A549 (cell line): ENCODE measurements at regions of chr17 and their contacts with region 1.

Region 1: DNA sequence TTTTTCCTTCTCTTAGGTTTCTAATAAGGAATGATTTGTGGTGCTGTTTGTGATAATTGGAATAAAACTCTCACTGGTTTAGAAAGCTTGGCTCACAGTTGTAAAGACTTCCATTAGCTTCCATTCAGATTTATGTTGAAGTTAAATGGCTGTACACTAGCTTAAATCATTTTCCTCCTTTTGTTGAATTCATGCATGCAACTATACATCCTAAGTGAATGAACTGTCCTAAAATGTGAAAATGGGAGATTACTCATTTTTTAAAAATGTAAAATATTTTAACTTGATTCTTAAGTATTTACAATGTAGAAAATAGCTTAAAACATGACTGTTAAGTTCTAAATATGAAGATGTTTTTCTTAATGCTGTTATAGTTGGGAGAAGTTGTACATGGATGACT is 15.2 kb downstream of the PRKCA start:
- DNase-seq: no peak
- ATAC-seq: no peak
- H3K4me3 ChIP-seq: no peak overlapping the region
- H3K27ac ChIP-seq: peak overlapping the region; percentile 15 to 36; a peak in 2 of 6 replicates
- H3K4me1 ChIP-seq: peaks cover 29% of the 10 kb centered on the region
- CTCF ChIP-seq: no peak
- EP300 ChIP-seq: no peak
- POLR2A ChIP-seq: no peak
- RAD21 ChIP-seq: no peak

Region 2: DNA sequence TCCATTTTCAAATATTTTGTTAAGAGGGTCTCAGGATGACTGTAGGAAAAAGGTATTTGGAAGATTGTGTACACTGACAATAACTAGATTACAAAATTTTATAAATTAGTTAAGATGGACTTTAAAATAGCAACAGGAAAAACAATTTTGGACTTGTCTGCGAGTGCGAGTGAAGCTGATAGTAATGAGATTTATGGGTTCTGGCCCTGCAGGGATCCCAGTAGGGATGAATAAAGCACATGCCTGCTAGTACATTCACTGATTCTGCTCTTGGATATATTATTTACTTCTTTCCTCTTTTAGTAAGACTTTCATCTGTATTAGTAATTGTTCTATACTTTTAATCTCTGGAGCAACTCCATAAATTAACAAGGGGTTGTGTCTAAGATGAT is 13.0 kb after region 1 on chr17:
- CTCF ChIA-PET with region 1: interaction called, 10 read pairs
- POLR2A ChIA-PET with region 1: no interaction called
- DNase-seq: no peak
- ATAC-seq: no peak
- H3K4me3 ChIP-seq: no peak overlapping the region
- H3K27ac ChIP-seq: no peak overlapping the region
- H3K4me1 ChIP-seq: no peaks in the 10 kb centered on the region
- CTCF ChIP-seq: no peak
- EP300 ChIP-seq: no peak
- POLR2A ChIP-seq: no peak
- RAD21 ChIP-seq: no peak

Region 3: GRCh38 chr17:66405836-66406677 is 88.4 kb after region 1 on chr17:
- CTCF ChIA-PET with region 1: no interaction called
- POLR2A ChIA-PET with region 1: no interaction called
- DNase-seq: no peak
- ATAC-seq: no peak
- H3K4me3 ChIP-seq: no peak overlapping the region
- H3K27ac ChIP-seq: no peak overlapping the region
- H3K4me1 ChIP-seq: peaks cover 7% of the 10 kb centered on the region; the same call in 1 of the 3 replicates
- CTCF ChIP-seq: no peak
- EP300 ChIP-seq: no peak
- POLR2A ChIP-seq: no peak
- RAD21 ChIP-seq: no peak